B cell (primary cell): ENCODE measurements at regions of chr10 and their contacts with region 1.

Region 1: GRCh38 chr10:3043512-3044368 is 23.6 kb upstream of the PFKP start:
- DNase-seq: peak; percentile 80
- ATAC-seq: peak; percentile 80
- H3K4me3 ChIP-seq: no peak overlapping the region
- H3K4me3 Mint-ChIP-seq: no peak overlapping the region
- H3K27ac ChIP-seq: no peak overlapping the region
- H3K27ac Mint-ChIP-seq: no peak overlapping the region
- H3K4me1 ChIP-seq: no peaks in the 10 kb centered on the region
- H3K4me1 Mint-ChIP-seq: peaks cover 5% of the 10 kb centered on the region
- H3K27me3 ChIP-seq: peaks cover 0 to 24% (median 0%) of the 10 kb centered on the region in 4 experiments
- H3K27me3 Mint-ChIP-seq: peaks cover 7% of the 10 kb centered on the region
- CTCF ChIP-seq: peak; percentile 89

Region 2: GRCh38 chr10:1420661-1421362 is 1622.9 kb before region 1 on chr10:
- CTCF ChIA-PET with region 1: interaction called, 5 read pairs
- POLR2A ChIA-PET with region 1: no interaction called
- intact Hi-C with region 1: loop called (anchors 5 kb)
- DNase-seq: peak; percentile 90
- ATAC-seq: peak; percentile 78
- H3K4me3 ChIP-seq: peak overlapping the region in 3 of 5 experiments; percentile 23 to 42 (median 24)
- H3K4me3 Mint-ChIP-seq: peak overlapping the region; percentile 78
- H3K27ac ChIP-seq: peak overlapping the region in 1 of 2 donors; percentile 14
- H3K27ac Mint-ChIP-seq: peak overlapping the region; percentile 80
- H3K4me1 ChIP-seq: peaks cover 50 to 63% of the 10 kb centered on the region in 2 donors
- H3K4me1 Mint-ChIP-seq: peaks cover 60% of the 10 kb centered on the region
- H3K27me3 ChIP-seq: no peaks in the 10 kb centered on the region
- H3K27me3 Mint-ChIP-seq: peaks cover 4% of the 10 kb centered on the region
- CTCF ChIP-seq: peak; percentile 90

Region 3: GRCh38 chr10:2137549-2138174 is 906.1 kb before region 1 on chr10:
- CTCF ChIA-PET with region 1: interaction called, 5 read pairs
- POLR2A ChIA-PET with region 1: no interaction called
- intact Hi-C with region 1: loop called (anchors 2 kb)
- DNase-seq: peak; percentile 13
- ATAC-seq: no peak
- H3K4me3 ChIP-seq: no peak overlapping the region
- H3K4me3 Mint-ChIP-seq: no peak overlapping the region
- H3K27ac ChIP-seq: no peak overlapping the region
- H3K27ac Mint-ChIP-seq: no peak overlapping the region
- H3K4me1 ChIP-seq: no peaks in the 10 kb centered on the region
- H3K4me1 Mint-ChIP-seq: no peaks in the 10 kb centered on the region
- H3K27me3 ChIP-seq: no peaks in the 10 kb centered on the region
- H3K27me3 Mint-ChIP-seq: peaks cover 7% of the 10 kb centered on the region
- CTCF ChIP-seq: peak; percentile 27

Region 4: DNA sequence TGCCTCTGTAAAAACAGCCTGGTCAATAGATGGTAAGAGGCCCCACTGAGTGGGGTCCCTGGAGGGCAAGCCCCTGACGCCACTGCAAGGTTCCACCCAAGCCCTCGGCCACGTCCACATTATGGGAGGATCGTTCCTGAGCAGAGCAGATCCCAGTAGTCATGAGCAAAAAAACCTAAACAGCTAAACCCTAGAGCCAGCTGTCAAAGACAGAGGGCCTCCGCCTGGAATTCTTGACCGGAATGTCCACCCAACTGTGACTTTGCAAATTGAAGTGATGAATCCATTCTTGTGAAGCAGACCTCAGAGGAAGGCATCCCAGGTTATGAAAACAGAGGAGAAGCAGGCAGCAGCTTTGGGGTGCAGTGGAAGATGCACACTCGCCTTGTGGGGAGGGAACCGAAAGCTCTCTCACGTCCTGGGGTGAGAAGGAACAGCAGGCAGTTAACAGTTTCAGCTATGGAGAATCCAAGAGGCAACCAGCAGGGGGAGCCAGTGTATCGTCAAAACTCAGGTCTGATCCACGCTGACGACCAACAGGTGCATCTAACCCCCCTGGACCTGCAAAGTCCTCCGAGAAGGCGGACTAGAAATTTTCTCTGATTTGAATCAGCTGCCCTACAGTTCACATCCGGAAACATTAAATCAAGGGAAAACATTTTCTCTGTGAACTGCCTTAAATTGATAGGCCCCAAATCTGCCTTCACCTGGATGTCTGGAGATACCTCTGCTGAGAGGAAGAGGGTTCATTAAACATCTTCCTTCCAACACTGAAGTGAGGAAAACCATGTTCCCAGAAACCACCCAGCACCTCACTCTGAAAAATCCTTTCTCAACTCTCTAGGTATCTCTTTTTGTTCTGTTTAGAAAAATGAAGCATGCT is 115.5 kb before region 1 on chr10:
- CTCF ChIA-PET with region 1: interaction called, 56 read pairs
- POLR2A ChIA-PET with region 1: no interaction called
- intact Hi-C with region 1: loop called (anchors 1 kb)
- DNase-seq: peak; percentile 71
- ATAC-seq: peak; percentile 58
- H3K4me3 ChIP-seq: no peak overlapping the region
- H3K4me3 Mint-ChIP-seq: no peak overlapping the region
- H3K27ac ChIP-seq: no peak overlapping the region
- H3K27ac Mint-ChIP-seq: no peak overlapping the region
- H3K4me1 ChIP-seq: peaks cover 0 to 4% of the 10 kb centered on the region in 2 donors
- H3K4me1 Mint-ChIP-seq: peaks cover 6% of the 10 kb centered on the region
- H3K27me3 ChIP-seq: peaks cover 0 to 9% (median 3%) of the 10 kb centered on the region in 4 experiments
- H3K27me3 Mint-ChIP-seq: peaks cover 26% of the 10 kb centered on the region
- CTCF ChIP-seq: peak; percentile 59

Region 5: GRCh38 chr10:3054183-3054850 is 10.6 kb after region 1 on chr10:
- CTCF ChIA-PET with region 1: interaction called, 10 read pairs
- POLR2A ChIA-PET with region 1: no interaction called
- intact Hi-C with region 1: no loop called
- DNase-seq: no peak
- ATAC-seq: no peak
- H3K4me3 ChIP-seq: no peak overlapping the region
- H3K4me3 Mint-ChIP-seq: no peak overlapping the region
- H3K27ac ChIP-seq: no peak overlapping the region
- H3K27ac Mint-ChIP-seq: no peak overlapping the region
- H3K4me1 ChIP-seq: no peaks in the 10 kb centered on the region
- H3K4me1 Mint-ChIP-seq: no peaks in the 10 kb centered on the region
- H3K27me3 ChIP-seq: peaks cover 0 to 11% (median 0%) of the 10 kb centered on the region in 4 experiments
- H3K27me3 Mint-ChIP-seq: peaks cover 28% of the 10 kb centered on the region
- CTCF ChIP-seq: no peak